Transverse colon (tissue), 4 donors: ENCODE measurements at regions of chr2 and their contacts with region 1.

Region 1: DNA sequence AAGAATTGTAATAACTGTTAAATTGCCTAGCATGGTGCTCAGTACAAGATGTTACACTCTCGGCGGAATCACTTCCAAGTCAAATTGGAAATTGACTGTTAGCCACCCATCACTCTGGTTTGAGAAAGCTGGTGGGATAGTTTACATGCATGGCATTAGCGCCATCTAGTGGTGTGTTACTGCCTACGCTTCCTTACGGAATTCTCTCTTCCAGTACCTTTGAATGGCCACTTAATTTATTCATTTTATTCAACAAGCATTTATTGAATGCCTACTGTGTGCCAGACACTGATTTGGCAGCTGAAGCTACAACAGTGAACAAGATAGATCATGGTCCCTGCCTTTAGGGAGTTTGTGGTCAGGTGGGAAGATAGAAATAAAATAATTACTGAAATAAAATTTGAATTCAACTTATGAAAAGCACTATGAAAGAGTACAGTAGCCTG is 171.2 kb downstream of the TMEM247 start:
- DNase-seq: peak; percentile 74
- H3K4me3 ChIP-seq: no peak overlapping the region
- H3K27ac ChIP-seq: no peak overlapping the region
- H3K4me1 ChIP-seq: peaks cover 0 to 6% (median 6%) of the 10 kb centered on the region in 4 donors
- H3K27me3 ChIP-seq: no peaks in the 10 kb centered on the region
- CTCF ChIP-seq: peak; percentile 93 to 99 (median 96)
- EP300 ChIP-seq: no peak
- POLR2A ChIP-seq: no peak

Region 2: GRCh38 chr2:46394649-46395510 is 255.7 kb before region 1 on chr2:
- in situ Hi-C with region 1: no loop called
- intact Hi-C with region 1: no loop called
- DNase-seq: no peak
- H3K4me3 ChIP-seq: no peak overlapping the region
- H3K27ac ChIP-seq: no peak overlapping the region
- H3K4me1 ChIP-seq: no peaks in the 10 kb centered on the region
- H3K27me3 ChIP-seq: no peaks in the 10 kb centered on the region
- CTCF ChIP-seq: no peak
- EP300 ChIP-seq: no peak
- POLR2A ChIP-seq: no peak

Region 3: GRCh38 chr2:46469116-46469515 is 181.5 kb before region 1 on chr2:
- in situ Hi-C with region 1: loop called in 2 of 4 experiments (anchors 5 kb)
- intact Hi-C with region 1: loop called (anchors 5 kb)
- DNase-seq: no peak
- H3K4me3 ChIP-seq: no peak overlapping the region
- H3K27ac ChIP-seq: no peak overlapping the region
- H3K4me1 ChIP-seq: no peaks in the 10 kb centered on the region
- H3K27me3 ChIP-seq: no peaks in the 10 kb centered on the region
- CTCF ChIP-seq: no peak
- EP300 ChIP-seq: no peak
- POLR2A ChIP-seq: no peak

Region 4: DNA sequence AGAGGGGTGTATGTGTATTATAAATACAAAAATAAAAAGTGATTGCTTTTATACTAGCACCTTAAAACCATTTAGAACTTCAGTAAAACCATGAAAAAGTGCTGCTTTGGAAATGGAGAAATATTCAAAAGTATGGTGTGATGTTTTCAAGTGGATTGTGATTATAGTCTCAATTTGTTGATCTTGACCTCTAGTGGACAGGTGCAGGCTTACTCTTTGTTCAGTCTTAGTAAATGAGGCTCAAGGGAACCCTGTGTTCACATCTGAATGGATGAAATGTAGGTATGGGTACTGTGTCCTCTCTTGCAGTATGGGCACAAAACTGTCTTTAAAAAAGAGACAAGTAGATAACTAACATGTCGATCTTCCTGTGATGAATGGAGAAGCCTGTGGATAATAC is 119.2 kb after region 1 on chr2:
- in situ Hi-C with region 1: loop called in 1 of 4 experiments (anchors 25 kb)
- intact Hi-C with region 1: no loop called
- DNase-seq: no peak
- H3K4me3 ChIP-seq: no peak overlapping the region
- H3K27ac ChIP-seq: no peak overlapping the region
- H3K4me1 ChIP-seq: no peaks in the 10 kb centered on the region
- H3K27me3 ChIP-seq: no peaks in the 10 kb centered on the region
- CTCF ChIP-seq: peak in 1 of 5 experiments; percentile 24
- EP300 ChIP-seq: no peak
- POLR2A ChIP-seq: no peak

Region 5: DNA sequence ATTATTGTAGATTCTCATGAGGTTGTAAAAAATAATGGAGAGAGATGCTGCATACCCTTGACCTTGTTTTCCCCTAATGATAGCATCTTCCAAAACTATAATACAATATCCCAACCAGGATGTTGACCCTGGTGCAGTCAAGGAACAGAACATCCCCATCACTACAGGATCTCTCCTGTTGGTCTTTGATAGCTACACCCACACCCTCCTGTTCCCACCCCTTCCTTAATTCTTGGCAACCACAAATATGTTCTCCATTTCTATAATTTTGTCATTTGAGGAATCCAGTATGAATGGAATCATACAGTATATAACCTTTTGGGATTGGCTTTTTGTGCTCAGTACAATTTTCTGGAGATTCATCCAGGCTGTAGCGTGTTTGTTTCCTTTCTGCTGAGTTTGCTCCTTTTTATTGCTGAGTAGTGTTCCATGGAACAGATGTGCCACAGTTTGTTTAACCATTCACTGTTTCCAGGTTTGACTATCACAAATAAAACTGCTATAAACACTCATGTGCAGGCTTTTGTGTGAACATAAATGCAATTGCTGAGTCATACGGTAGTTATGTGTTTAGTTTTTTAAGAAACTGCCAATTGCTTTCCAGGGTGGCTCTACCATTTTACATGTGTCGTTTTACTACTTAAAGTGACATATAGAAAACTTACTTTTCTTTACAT is 242.8 kb after region 1 on chr2:
- in situ Hi-C with region 1: loop called in 1 of 4 experiments (anchors 5 kb)
- intact Hi-C with region 1: no loop called
- DNase-seq: no peak
- H3K4me3 ChIP-seq: no peak overlapping the region
- H3K27ac ChIP-seq: no peak overlapping the region
- H3K4me1 ChIP-seq: peaks cover 0 to 4% (median 0%) of the 10 kb centered on the region in 4 donors
- H3K27me3 ChIP-seq: no peaks in the 10 kb centered on the region
- CTCF ChIP-seq: no peak
- EP300 ChIP-seq: no peak
- POLR2A ChIP-seq: no peak